ENCODE measurements at regions of chr15 and their contacts with region 1.

Region 1: GRCh38 chr15:31435261-31435911 is 108.8 kb downstream of the KLF13 start:
- DNase-seq: peak; percentile 88 to 95 (median 95)
- H3K4me3 ChIP-seq: peak overlapping the region; percentile 11 to 73 (median 56)
- H3K27ac ChIP-seq: peak overlapping the region; percentile 95 to 97
- H3K4me1 ChIP-seq: peaks cover 9 to 67% (median 58%) of the 10 kb centered on the region in 4 experiments
- H3K27me3 ChIP-seq: no peaks in the 10 kb centered on the region

Region 2: DNA sequence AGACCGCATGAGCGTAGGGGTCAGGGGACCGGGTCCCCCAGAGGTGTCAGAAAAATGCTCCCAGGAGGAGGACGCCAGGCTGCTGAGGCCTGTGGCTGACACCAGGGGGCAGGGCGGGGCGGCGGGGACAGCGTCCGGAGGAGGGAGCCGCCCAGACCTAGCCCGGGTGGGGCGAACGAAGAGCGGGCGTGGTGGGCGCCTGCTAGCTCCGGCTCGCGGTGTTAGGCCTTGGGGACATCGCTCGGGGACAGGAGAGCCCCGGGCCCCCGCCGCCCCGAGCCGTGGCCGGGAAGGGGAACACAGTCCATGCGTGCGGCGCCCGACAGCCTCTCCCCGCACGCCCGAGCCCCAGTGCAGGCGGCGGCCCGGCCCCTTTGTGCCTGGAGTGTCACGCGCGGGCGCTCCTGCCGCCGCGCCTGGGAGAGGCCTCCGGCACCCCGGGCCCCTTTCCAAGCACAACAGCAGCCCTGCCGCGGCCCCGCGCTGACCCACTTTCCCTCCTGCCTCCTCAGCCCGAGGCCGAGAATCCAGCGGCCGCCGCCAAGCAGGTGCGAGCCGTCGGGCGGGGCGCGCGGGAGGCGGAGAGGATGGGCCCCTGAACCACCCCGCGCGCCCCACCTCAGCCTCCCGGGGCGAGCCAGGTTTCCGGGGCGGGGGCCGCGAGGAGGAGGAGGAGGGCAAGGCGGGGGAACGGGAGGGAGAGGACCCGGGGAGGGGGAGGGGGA is 219.7 kb before region 1 on chr15:
- CTCF ChIA-PET with region 1: interaction called, 15 read pairs
- POLR2A ChIA-PET with region 1: interaction called, 3 read pairs
- DNase-seq: peak; percentile 65 to 84 (median 76)
- H3K4me3 ChIP-seq: peak overlapping the region; percentile 33 to 77 (median 59)
- H3K27ac ChIP-seq: no peak overlapping the region
- H3K4me1 ChIP-seq: peaks cover 3 to 48% (median 17%) of the 10 kb centered on the region in 4 experiments
- H3K27me3 ChIP-seq: no peaks in the 10 kb centered on the region

Region 3: DNA sequence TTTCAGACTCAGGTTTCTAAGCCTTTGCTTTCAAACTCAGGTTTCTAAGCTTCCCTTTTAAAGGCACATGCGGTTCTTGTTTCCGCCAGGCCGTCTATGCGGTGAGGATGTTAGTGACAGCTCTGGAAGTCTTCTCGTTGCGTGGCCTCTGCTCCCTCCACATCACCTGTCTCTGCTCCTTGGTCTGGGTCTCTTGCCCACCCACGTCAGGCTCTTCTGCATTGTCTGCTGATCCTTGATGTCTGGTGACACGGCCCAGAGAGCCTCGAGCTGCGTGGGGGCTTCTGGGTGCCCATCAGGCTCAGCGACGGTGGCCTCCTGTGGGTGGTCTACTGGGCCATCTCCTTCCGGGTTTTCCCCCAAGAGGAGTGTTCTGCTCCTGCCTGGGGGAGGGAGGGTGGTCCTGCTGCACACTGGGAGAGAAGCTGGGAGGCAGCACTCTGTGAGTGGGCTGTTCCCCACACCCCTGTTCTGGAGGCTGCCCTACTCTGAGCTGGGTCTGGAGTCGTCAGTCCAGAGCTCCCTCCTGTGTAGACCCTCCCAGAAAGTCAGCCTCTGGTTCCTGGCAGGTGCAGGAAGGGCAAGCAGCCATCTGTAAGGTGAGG is 78.1 kb before region 1 on chr15:
- CTCF ChIA-PET with region 1: interaction called, 14 read pairs
- POLR2A ChIA-PET with region 1: no interaction called
- DNase-seq: peak; percentile 46 to 88 (median 79)
- H3K4me3 ChIP-seq: peak overlapping the region in 3 of 7 experiments; percentile 8 to 46 (median 30)
- H3K27ac ChIP-seq: peak overlapping the region in 1 of 2 experiments; percentile 30
- H3K4me1 ChIP-seq: peaks cover 38 to 96% (median 88%) of the 10 kb centered on the region in 4 experiments
- H3K27me3 ChIP-seq: no peaks in the 10 kb centered on the region

Region 4: DNA sequence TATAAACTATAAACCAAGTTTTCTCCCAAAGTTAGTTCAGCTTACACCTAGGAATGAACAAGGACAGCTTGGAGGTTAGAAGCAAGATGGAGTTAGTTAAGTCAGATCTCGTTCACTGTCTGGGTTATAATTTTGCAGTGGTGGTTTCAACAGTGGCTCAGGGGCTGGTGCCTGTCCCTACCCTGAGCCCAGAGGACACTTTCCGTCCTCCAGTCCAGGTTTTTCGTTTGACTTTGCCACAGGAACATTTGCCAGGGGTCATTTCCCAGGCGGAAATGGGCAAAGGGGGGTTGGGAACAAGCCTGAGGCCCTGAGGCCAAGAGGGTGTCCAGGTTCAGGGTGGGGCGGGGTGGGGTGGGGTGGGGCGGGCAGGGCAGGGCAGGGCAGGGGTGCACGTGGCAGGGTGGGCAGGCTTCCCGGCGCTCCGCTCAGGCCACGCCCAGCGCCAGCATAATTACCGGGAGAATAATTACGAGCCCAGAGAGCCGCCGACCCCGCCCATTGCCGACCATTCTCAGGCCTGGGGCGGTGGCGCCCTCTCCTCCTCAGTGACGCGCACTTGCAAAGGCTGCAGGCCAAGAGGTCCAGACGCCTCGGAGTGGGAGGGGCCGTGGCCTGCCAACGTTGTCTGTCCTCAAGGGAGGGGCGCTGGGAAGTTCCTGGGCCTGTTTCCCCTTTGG is 38.4 kb before region 1 on chr15:
- CTCF ChIA-PET with region 1: interaction called, 12 read pairs
- POLR2A ChIA-PET with region 1: no interaction called
- DNase-seq: peak; percentile 29 to 55 (median 36)
- H3K4me3 ChIP-seq: peak overlapping the region in 4 of 7 experiments; percentile 19 to 54 (median 27)
- H3K27ac ChIP-seq: no peak overlapping the region
- H3K4me1 ChIP-seq: peaks cover 0 to 19% (median 16%) of the 10 kb centered on the region in 4 experiments
- H3K27me3 ChIP-seq: peaks cover 0 to 24% (median 7%) of the 10 kb centered on the region in 5 experiments

Region 5: DNA sequence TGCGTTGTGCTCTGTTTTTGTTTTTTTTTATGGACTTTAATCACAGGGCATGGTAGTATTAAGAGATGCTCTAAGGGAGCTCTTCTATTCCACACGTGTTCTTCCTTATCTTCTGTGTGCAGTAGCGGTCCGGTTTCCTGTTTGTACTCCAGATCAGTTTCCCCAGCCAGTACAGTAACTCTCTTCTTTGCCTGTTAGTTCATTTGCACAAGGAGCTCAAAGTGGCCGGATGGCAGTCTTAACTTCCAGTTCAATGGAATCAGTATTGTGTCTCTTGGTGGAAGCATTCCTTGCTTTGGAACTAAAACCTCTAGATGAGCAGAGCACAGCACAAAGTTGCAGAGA is 13.2 kb after region 1 on chr15:
- CTCF ChIA-PET with region 1: interaction called, 10 read pairs
- POLR2A ChIA-PET with region 1: interaction called, 3 read pairs
- DNase-seq: peak; percentile 81 to 96 (median 92)
- H3K4me3 ChIP-seq: peak overlapping the region in 3 of 7 experiments; percentile 29 to 47 (median 40)
- H3K27ac ChIP-seq: peak overlapping the region in 1 of 2 experiments; percentile 10
- H3K4me1 ChIP-seq: peaks cover 12 to 23% (median 14%) of the 10 kb centered on the region in 4 experiments
- H3K27me3 ChIP-seq: no peaks in the 10 kb centered on the region

Region 6: GRCh38 chr15:31488426-31489204 is 53.2 kb after region 1 on chr15:
- CTCF ChIA-PET with region 1: interaction called, 188 read pairs
- POLR2A ChIA-PET with region 1: no interaction called
- DNase-seq: peak; percentile 84 to 90 (median 87)
- H3K4me3 ChIP-seq: no peak overlapping the region
- H3K27ac ChIP-seq: no peak overlapping the region
- H3K4me1 ChIP-seq: peaks cover 0 to 10% (median 2%) of the 10 kb centered on the region in 4 experiments
- H3K27me3 ChIP-seq: peaks cover 0 to 23% (median 14%) of the 10 kb centered on the region in 5 experiments